Activated B cell treated with CpG ODN at 0.5 μM for 24 hours (primary cell): ENCODE measurements at regions of chr10 and their contacts with region 1.

Region 1: DNA sequence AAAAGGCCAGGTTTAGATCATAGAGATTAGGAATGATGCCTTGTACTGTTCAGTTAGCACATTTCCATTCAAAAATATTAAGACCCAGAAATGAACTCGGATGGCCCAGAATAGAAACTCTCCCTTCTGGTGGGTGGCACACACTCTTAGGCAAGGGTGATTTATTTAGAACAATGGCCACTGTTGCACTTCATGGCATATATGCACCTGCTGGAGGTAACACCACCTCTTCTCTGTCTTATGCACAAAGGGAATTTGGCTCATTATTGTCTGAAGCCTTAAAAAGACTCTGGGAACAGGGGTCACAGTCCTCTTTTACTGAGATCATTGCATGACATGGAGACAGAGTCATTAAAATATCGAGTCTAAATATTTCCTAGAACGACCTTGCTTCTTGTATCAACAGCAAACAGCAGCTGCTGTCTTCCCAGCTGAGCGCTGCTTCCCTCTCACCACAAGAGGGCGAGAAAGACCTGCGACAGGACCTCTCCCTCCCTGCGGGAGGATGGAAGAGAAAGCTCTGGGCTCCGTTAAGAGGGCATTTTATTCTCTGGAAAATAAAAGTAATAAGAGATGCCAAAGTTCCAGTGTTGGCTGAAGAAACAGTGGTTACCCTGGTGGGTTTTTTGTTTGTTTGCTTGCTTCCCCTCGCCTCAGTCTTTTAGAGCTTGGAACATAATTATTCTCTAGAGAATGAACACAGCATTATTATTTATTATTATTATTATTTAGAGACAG is 13.6 kb upstream of the BAMBI start:
- DNase-seq: peak; percentile 32
- ATAC-seq: peak; percentile 84
- H3K4me3 Mint-ChIP-seq: no peak overlapping the region
- H3K27ac Mint-ChIP-seq: no peak overlapping the region
- H3K4me1 Mint-ChIP-seq: peaks cover 7% of the 10 kb centered on the region
- H3K27me3 Mint-ChIP-seq: peaks cover 41% of the 10 kb centered on the region
- CTCF ChIP-seq: no peak

Region 2: DNA sequence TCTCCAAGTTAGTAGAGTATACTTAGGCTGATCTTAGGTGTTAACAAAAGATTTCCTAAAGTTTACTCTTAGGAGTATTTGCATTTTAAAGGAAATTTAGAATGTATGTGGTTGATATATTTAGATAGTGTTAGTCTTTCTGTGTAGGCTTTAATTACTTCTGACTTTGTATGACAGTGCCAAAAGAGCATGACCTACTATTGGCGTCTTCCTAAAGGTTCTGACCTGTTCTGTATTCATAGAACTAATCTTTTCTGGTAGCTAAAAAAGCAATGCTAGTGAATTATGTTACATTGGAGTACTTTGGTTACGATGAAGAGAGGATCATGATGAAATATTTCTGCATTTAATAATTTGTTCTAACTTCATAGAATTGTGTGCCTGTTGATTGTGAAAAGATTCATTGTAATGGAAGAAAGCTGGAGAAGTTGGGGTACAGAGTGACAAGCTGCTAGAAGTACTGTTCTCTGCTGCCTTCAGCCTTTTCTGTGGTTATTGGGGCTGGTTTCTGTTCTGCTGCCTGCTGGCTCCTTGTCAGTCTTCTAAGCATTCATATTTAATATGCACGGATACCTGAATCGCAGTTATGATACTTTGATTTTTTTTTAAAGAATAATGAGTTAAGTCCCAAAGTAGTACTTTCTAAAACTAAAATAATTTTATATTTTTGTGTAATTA is 117.6 kb before region 1 on chr10:
- CTCF ChIA-PET with region 1: no interaction called
- POLR2A ChIA-PET with region 1: no interaction called
- intact Hi-C with region 1: no loop called
- DNase-seq: no peak
- ATAC-seq: no peak
- H3K4me3 Mint-ChIP-seq: no peak overlapping the region
- H3K27ac Mint-ChIP-seq: peak overlapping the region; percentile 10
- H3K4me1 Mint-ChIP-seq: peaks cover 64% of the 10 kb centered on the region
- H3K27me3 Mint-ChIP-seq: no peaks in the 10 kb centered on the region
- CTCF ChIP-seq: no peak

Region 3: GRCh38 chr10:29131952-29132820 is 468.4 kb after region 1 on chr10:
- CTCF ChIA-PET with region 1: interaction called, 3 read pairs
- POLR2A ChIA-PET with region 1: no interaction called
- intact Hi-C with region 1: loop called (anchors 5 kb)
- DNase-seq: no peak
- ATAC-seq: no peak
- H3K4me3 Mint-ChIP-seq: no peak overlapping the region
- H3K27ac Mint-ChIP-seq: no peak overlapping the region
- H3K4me1 Mint-ChIP-seq: no peaks in the 10 kb centered on the region
- H3K27me3 Mint-ChIP-seq: peaks cover 9% of the 10 kb centered on the region
- CTCF ChIP-seq: no peak

Region 4: GRCh38 chr10:29392376-29393021 is 728.8 kb after region 1 on chr10:
- CTCF ChIA-PET with region 1: no interaction called
- POLR2A ChIA-PET with region 1: no interaction called
- intact Hi-C with region 1: loop called (anchors 1 kb)
- DNase-seq: no peak
- ATAC-seq: peak; percentile 49
- H3K4me3 Mint-ChIP-seq: no peak overlapping the region
- H3K27ac Mint-ChIP-seq: no peak overlapping the region
- H3K4me1 Mint-ChIP-seq: no peaks in the 10 kb centered on the region
- H3K27me3 Mint-ChIP-seq: peaks cover 7% of the 10 kb centered on the region
- CTCF ChIP-seq: no peak

Region 5: GRCh38 chr10:29496341-29497162 is 832.8 kb after region 1 on chr10:
- CTCF ChIA-PET with region 1: interaction called, 8 read pairs
- POLR2A ChIA-PET with region 1: no interaction called
- intact Hi-C with region 1: loop called (anchors 1 kb)
- DNase-seq: no peak
- ATAC-seq: peak; percentile 42
- H3K4me3 Mint-ChIP-seq: no peak overlapping the region
- H3K27ac Mint-ChIP-seq: no peak overlapping the region
- H3K4me1 Mint-ChIP-seq: no peaks in the 10 kb centered on the region
- H3K27me3 Mint-ChIP-seq: peaks cover 3% of the 10 kb centered on the region
- CTCF ChIP-seq: peak; percentile 54